Lower leg skin (tissue), 4 donors: ENCODE measurements at regions of chr2 and their contacts with region 1.

Region 1: GRCh38 chr2:10043906-10044601 is 704 bp downstream of the KLF11 start:
- DNase-seq: peak; percentile 98 to 100
- H3K4me3 ChIP-seq: peak overlapping the region; percentile 24
- CTCF ChIP-seq: no peak
- POLR2A ChIP-seq: no peak

Region 2: DNA sequence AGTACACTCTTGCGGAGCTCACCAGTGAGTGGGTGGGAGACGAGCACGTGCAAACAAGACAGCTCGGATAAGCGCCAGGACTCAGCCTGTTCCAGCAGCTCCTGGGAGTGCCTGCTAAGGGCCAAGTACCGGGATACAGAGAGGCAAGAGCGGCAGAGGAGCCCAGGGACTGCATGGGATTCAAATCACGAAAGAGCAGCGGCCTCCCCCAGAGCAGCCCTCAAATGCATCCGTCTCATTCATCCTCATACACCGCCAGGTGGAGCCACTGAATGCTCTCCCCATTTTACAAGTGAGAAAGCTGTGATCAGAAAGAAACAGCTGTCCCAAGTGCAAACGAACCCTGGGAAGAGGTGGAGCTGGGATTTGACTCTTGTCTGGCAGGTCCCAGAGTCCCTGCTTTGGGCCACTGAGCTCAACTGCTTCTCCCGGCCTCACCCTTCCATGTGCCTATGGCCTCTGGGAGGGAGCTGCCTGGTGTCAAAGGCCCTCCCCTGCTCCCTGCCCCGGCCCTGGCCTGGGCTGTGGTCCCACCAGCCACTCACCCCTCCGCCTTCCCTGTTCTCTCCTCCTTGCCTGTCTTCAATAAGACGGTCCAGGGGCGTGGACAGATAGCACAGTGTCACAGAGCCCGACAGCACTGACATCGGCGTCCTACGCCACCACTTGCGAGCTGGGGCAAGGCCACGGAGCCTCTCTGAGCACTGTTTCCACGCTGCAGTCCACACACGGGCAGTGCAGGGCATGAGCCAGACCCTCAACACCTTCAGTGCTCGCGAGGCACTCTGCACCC is 273.6 kb before region 1 on chr2:
- intact Hi-C with region 1: loop called (anchors 10 kb)
- DNase-seq: peak in 1 of 2 donors; percentile 74
- H3K4me3 ChIP-seq: no peak overlapping the region
- CTCF ChIP-seq: no peak
- POLR2A ChIP-seq: no peak

Region 3: GRCh38 chr2:9799665-9800632 is 244.1 kb before region 1 on chr2:
- intact Hi-C with region 1: loop called (anchors 10 kb)
- DNase-seq: peak; percentile 80 to 98
- H3K4me3 ChIP-seq: no peak overlapping the region
- CTCF ChIP-seq: peak in 1 of 3 donors; percentile 87
- POLR2A ChIP-seq: no peak

Region 4: GRCh38 chr2:9951973-9952737 is 91.9 kb before region 1 on chr2:
- intact Hi-C with region 1: loop called (anchors 1 kb)
- DNase-seq: no peak
- H3K4me3 ChIP-seq: peak overlapping the region; percentile 62
- CTCF ChIP-seq: no peak
- POLR2A ChIP-seq: no peak

Region 5: GRCh38 chr2:9984217-9984739 is 59.8 kb before region 1 on chr2:
- intact Hi-C with region 1: loop called (anchors 5 kb)
- DNase-seq: no peak
- H3K4me3 ChIP-seq: no peak overlapping the region
- CTCF ChIP-seq: peak in 1 of 3 donors; percentile 48
- POLR2A ChIP-seq: no peak

Region 6: DNA sequence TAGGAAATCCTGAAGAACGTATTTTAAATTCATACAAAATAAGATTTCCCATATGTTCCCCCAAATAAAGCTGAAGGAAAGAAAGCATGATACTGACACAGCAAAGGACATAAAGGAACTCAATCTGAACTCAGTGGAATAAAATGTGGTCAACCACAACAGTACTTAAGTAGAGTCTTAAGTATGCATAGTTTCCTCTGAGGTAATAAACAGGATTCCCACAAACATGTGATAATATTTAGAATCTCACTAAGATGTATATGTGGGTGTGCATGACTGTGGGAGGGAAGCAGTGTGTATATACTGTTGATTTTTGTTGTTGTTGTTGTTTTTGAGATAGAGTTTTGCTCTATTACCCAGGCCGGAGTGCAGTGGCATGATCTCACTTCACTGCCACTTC is 576.4 kb after region 1 on chr2:
- intact Hi-C with region 1: no loop called
- DNase-seq: no peak
- H3K4me3 ChIP-seq: no peak overlapping the region
- CTCF ChIP-seq: no peak
- POLR2A ChIP-seq: no peak